T-cell (primary cell): ENCODE measurements at regions of chr2 and their contacts with region 1.

Region 1: GRCh38 chr2:175457895-175458448 is 276.5 kb upstream of the ATP5MC3 start:
- DNase-seq: no peak
- ATAC-seq: no peak
- H3K4me3 ChIP-seq: no peak overlapping the region
- H3K4me3 Mint-ChIP-seq: no peak overlapping the region
- H3K27ac ChIP-seq: no peak overlapping the region
- H3K27ac Mint-ChIP-seq: no peak overlapping the region
- H3K4me1 ChIP-seq: no peaks in the 10 kb centered on the region
- H3K4me1 Mint-ChIP-seq: no peaks in the 10 kb centered on the region
- H3K27me3 ChIP-seq: peaks cover 0 to 3% of the 10 kb centered on the region in 2 experiments
- H3K27me3 Mint-ChIP-seq: peaks cover 1 to 3% of the 10 kb centered on the region in 2 donors

Region 2: GRCh38 chr2:175432021-175432420 is 26.0 kb before region 1 on chr2:
- CTCF ChIA-PET with region 1: interaction called in 1 of 2 experiments, 15 read pairs
- POLR2A ChIA-PET with region 1: no interaction called
- DNase-seq: no peak
- ATAC-seq: no peak
- H3K4me3 ChIP-seq: no peak overlapping the region
- H3K4me3 Mint-ChIP-seq: no peak overlapping the region
- H3K27ac ChIP-seq: no peak overlapping the region
- H3K27ac Mint-ChIP-seq: no peak overlapping the region
- H3K4me1 ChIP-seq: no peaks in the 10 kb centered on the region
- H3K4me1 Mint-ChIP-seq: no peaks in the 10 kb centered on the region
- H3K27me3 ChIP-seq: no peaks in the 10 kb centered on the region
- H3K27me3 Mint-ChIP-seq: no peaks in the 10 kb centered on the region